Lower leg skin (tissue), 4 donors: ENCODE measurements at regions of chr11 and their contacts with region 1.

Region 1: DNA sequence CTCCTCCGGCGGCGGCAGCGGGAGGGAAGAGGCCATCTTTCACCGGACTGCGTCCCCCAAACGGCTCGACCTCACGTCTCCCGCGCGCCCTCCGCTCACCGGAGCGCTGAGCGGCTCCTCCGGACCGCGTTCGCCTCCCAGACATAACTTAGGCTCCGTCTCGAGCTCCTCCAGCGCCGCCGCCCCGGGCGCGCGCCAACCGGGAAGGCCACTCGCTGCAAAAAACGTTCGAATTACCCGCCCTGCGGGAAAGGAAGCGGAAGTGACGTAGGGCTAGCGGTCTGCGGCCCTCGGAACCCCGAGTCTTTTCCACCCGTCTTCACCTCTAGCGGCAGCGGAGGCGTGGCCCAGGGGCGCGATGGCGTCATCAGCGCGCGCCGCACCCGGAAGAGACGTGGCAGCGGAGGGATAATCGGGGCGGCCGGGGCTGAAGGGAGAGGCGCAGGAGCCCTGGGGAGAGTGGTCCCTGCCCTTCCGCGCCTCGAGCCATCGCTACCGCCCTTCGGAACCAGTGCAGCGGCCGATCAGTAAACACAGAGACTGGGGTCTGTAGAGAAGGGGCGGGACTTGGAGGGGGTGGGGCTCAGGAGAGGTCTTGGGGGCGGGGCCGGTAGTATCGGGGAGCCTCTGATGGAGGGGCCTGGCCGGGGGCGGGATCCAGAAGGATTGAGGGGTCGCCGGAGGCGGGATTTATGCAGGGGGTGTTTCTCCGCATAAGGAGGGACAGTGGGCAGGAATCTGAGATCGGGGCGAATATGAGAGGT is at the starts of genes CDCA5 and ZFPL1:
- DNase-seq: peak; percentile 93 to 99
- H3K4me3 ChIP-seq: peak within 1 kb of the TSS; percentile 28
- CTCF ChIP-seq: no peak
- POLR2A ChIP-seq: peak in 1 of 2 donors; percentile 39
- total RNA-seq, gene CDCA5: 1.0 to 2.4 (median 1.7) TPM
- total RNA-seq, gene ZFPL1: 45.8 to 72.3 (median 54.8) TPM

Region 2: DNA sequence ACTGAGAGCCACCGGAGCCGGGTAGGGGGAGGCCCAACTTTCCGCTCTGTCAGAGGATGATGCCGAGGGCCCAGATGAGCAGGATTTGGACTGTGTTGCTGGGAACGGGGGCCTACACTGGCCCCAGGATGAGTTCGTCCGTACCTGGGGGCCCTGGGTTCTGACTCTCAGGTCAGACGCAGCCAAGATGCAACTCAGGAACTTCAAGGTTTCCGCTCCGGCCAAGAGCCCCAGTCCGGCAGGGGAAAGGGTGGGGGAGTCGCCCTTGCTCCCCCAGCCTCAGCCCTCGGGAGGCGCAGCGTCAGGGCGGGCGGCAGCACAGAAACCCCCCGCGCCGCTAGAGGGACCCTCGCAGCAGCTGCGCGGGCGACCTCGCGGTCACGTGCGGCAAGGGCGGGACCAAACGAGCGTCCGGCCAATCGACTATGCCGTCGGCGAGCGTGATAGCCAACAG is 70.3 kb before region 1 on chr11:
- intact Hi-C with region 1: loop called (anchors 10 kb)
- DNase-seq: peak in 1 of 2 donors; percentile 97
- H3K4me3 ChIP-seq: peak overlapping the region; percentile 61
- CTCF ChIP-seq: no peak
- POLR2A ChIP-seq: no peak